B cell (primary cell): ENCODE measurements at regions of chr7 and their contacts with region 1.

Region 1: DNA sequence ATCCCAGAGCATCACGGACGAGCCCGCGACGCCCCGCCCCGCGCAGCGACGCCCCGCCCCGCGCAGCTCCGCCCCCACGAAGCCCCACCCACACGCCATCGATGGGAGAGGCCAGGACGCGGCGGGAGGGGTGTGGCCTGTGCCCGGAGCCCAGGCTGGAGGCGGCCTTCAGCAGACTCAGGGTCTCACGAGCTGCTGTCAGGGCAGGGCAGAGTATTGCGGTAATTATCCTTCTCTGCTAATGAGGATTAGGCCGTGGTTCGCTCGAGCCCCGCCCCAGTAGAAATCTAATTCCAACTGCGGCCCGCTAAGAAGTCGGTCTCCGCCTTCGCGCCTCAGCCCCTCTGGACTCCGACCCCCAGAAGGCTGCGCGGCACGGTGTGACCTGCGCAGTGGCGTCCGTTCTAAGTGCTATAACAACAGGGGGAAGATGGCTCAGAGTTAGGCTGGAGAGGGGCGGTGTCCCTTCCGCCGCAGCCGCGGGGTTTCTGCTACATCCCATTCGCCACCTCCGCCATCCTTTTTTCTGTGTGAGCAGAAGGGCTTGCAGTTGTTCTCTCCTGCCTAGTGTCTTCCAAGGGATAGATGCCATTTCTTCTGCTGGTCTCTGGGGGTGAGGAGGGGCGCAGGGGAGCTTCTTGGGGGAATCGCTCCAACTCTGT is 337 bp upstream of the NT5C3A start:
- DNase-seq: peak; percentile 98
- ATAC-seq: peak; percentile 93
- H3K4me3 ChIP-seq: peak overlapping the region; percentile 19 to 92 (median 75)
- H3K4me3 Mint-ChIP-seq: peak overlapping the region; percentile 91
- H3K27ac ChIP-seq: peak overlapping the region; percentile 68 to 79
- H3K27ac Mint-ChIP-seq: peak overlapping the region; percentile 94
- H3K4me1 ChIP-seq: peaks cover 30% of the 10 kb centered on the region in 2 donors
- H3K4me1 Mint-ChIP-seq: peaks cover 39% of the 10 kb centered on the region
- H3K27me3 ChIP-seq: no peaks in the 10 kb centered on the region
- H3K27me3 Mint-ChIP-seq: no peaks in the 10 kb centered on the region
- CTCF ChIP-seq: no peak

Region 2: DNA sequence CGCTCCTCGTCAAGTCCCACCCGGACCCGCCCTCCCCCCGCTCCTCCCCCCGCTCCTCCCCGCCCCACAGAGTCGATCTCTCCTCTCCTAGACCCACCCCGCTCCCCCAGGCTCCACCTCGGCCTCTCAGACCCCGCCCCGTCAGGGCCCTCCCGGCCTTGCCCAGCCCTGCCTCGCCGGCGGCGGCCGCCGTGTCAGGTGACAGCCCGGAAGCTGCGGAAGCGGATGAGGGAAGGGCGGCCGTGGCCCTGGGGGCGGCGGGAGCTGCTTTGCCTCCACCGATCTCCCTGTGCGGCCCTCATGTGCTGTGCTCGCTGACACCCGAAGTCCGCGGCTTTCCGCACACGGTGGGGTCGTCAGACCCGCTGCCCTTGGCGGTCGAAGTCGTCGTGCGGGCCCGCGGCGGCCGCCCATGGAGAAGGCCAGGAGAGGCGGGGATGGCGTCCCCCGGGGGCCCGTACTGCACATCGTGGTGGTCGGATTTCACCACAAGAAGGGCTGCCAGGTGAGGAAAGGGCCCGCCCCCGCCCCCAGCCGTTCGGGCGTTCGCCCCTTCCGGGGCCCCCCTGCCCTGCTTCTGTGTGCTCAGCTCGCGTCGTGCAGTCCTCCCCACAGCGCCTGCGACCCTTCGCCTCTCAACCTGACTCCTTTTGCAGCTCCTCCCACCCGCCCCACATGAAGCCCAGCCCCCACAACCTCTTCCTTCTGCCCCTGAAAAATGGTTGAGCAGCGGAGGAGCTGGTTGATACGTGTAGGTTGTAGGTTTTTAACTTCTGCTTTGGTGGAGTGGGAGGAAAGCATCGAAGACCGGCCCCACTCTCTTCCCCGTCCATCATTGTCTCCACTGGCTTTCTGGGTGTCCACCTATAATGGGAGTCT is 567.4 kb before region 1 on chr7 and contains the start of gene AVL9:
- CTCF ChIA-PET with region 1: no interaction called
- POLR2A ChIA-PET with region 1: interaction called, 7 read pairs
- intact Hi-C with region 1: loop called (anchors 1 kb)
- DNase-seq: peak; percentile 97
- ATAC-seq: peak; percentile 96
- H3K4me3 ChIP-seq: peak within 1 kb of the TSS; percentile 65 to 97 (median 91)
- H3K4me3 Mint-ChIP-seq: peak within 1 kb of the TSS; percentile 84
- H3K27ac ChIP-seq: peak within 1 kb of the TSS; percentile 85 to 98
- H3K27ac Mint-ChIP-seq: peak within 1 kb of the TSS; percentile 96
- H3K4me1 ChIP-seq: peaks cover 14 to 16% of the 10 kb centered on the region in 2 donors
- H3K4me1 Mint-ChIP-seq: peaks cover 36% of the 10 kb centered on the region
- H3K27me3 ChIP-seq: no peaks in the 10 kb centered on the region
- H3K27me3 Mint-ChIP-seq: no peaks in the 10 kb centered on the region
- CTCF ChIP-seq: no peak
- total RNA-seq, gene AVL9: 48.0 and 63.3 TPM in 2 replicates

Region 3: DNA sequence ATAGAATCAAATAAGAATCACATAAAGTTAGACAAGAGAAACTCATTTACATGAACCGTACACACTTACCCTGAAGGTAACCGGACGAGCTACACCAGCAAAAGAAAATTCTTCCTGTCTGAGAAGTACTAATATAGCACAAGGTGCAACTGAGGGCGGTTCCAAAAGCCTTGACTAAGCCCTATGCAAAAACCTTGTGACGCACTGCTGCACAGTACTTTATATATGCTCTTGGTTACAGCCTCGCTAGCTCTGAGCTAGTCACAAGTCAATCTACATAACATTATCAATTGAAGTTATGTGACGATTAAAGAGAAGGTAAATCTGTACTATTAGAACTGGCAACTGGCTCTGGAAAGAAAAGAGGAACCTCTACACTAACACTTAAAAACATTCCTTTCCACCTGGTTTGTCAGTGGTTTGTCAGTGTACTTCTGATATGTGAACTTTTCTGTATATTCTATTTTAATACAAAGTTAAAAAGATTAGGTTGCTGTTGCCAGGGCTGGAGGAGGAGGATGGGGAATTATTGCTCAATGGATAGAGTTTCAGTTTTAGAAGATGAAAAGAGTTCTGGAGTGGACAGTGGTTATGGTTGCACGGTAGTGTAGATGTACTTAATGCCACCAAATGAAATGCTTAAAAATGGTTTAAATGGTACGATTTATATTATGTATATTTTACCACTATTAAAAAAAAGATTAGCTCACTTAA is 22.0 kb before region 1 on chr7:
- CTCF ChIA-PET with region 1: interaction called, 8 read pairs
- POLR2A ChIA-PET with region 1: interaction called, 12 read pairs
- intact Hi-C with region 1: loop called (anchors 1 kb)
- DNase-seq: peak; percentile 85
- ATAC-seq: peak; percentile 96
- H3K4me3 ChIP-seq: peak overlapping the region; percentile 26 to 79 (median 44)
- H3K4me3 Mint-ChIP-seq: peak overlapping the region; percentile 84
- H3K27ac ChIP-seq: peak overlapping the region; percentile 2 to 73
- H3K27ac Mint-ChIP-seq: peak overlapping the region; percentile 86
- H3K4me1 ChIP-seq: peaks cover 21 to 40% of the 10 kb centered on the region in 2 donors
- H3K4me1 Mint-ChIP-seq: peaks cover 67% of the 10 kb centered on the region
- H3K27me3 ChIP-seq: no peaks in the 10 kb centered on the region
- H3K27me3 Mint-ChIP-seq: no peaks in the 10 kb centered on the region
- CTCF ChIP-seq: no peak

Region 4: DNA sequence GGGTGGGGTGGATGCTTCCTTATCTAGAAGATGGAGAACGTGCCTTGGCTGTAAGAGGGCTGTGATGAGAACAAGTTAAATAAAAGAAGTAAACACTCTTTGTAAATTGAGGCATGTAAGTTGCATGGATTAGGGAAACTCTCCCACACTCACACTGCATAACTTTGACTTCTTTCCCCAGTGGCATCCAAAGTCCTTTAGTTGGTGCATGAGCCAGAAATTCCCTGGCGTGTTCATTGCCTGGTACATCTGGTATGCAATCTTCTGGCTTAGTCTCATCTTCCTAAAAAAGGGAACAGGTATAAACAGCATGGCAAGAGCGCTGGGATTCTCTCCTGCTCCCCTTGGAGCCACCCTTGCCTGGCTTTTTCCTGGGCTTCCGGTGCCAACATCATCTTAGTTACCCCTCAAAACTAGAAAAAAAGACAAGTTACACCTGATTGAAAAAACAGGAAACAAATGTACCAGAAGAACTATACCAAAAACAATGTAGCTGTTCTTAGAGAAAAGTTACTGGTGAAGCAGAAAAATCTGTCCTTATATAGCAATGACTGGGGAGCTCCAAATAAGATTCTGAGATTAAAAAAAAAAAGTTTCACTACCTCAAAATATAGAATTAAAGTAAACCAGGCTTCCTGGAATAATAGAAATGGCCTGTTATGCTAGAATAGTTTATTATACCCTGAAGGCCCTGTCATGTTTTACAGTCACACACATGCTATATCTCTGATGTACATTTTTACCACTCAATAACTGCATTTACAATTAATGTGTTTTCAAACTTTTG is 36.4 kb after region 1 on chr7:
- CTCF ChIA-PET with region 1: interaction called, 5 read pairs
- POLR2A ChIA-PET with region 1: no interaction called
- intact Hi-C with region 1: loop called (anchors 2 kb)
- DNase-seq: peak; percentile 57
- ATAC-seq: peak; percentile 81
- H3K4me3 ChIP-seq: peak overlapping the region in 1 of 5 experiments; percentile 50
- H3K4me3 Mint-ChIP-seq: peak overlapping the region; percentile 69
- H3K27ac ChIP-seq: peak overlapping the region; percentile 25 to 88
- H3K27ac Mint-ChIP-seq: peak overlapping the region; percentile 89
- H3K4me1 ChIP-seq: peaks cover 43 to 53% of the 10 kb centered on the region in 2 donors
- H3K4me1 Mint-ChIP-seq: peaks cover 56% of the 10 kb centered on the region
- H3K27me3 ChIP-seq: no peaks in the 10 kb centered on the region
- H3K27me3 Mint-ChIP-seq: no peaks in the 10 kb centered on the region
- CTCF ChIP-seq: no peak

Region 5: GRCh38 chr7:33118383-33118782 is 55.5 kb after region 1 on chr7:
- CTCF ChIA-PET with region 1: no interaction called
- POLR2A ChIA-PET with region 1: no interaction called
- intact Hi-C with region 1: no loop called
- DNase-seq: no peak
- ATAC-seq: no peak
- H3K4me3 ChIP-seq: no peak overlapping the region
- H3K4me3 Mint-ChIP-seq: no peak overlapping the region
- H3K27ac ChIP-seq: no peak overlapping the region
- H3K27ac Mint-ChIP-seq: no peak overlapping the region
- H3K4me1 ChIP-seq: no peaks in the 10 kb centered on the region
- H3K4me1 Mint-ChIP-seq: no peaks in the 10 kb centered on the region
- H3K27me3 ChIP-seq: peaks cover 0 to 8% (median 3%) of the 10 kb centered on the region in 4 experiments
- H3K27me3 Mint-ChIP-seq: peaks cover 19% of the 10 kb centered on the region
- CTCF ChIP-seq: no peak

Region 6: GRCh38 chr7:33157781-33158180 is 94.9 kb after region 1 on chr7:
- CTCF ChIA-PET with region 1: no interaction called
- POLR2A ChIA-PET with region 1: no interaction called
- intact Hi-C with region 1: no loop called
- DNase-seq: no peak
- ATAC-seq: no peak
- H3K4me3 ChIP-seq: no peak overlapping the region
- H3K4me3 Mint-ChIP-seq: no peak overlapping the region
- H3K27ac ChIP-seq: no peak overlapping the region
- H3K27ac Mint-ChIP-seq: no peak overlapping the region
- H3K4me1 ChIP-seq: no peaks in the 10 kb centered on the region
- H3K4me1 Mint-ChIP-seq: peaks cover 3% of the 10 kb centered on the region
- H3K27me3 ChIP-seq: no peaks in the 10 kb centered on the region
- H3K27me3 Mint-ChIP-seq: no peaks in the 10 kb centered on the region
- CTCF ChIP-seq: no peak

Region 7: GRCh38 chr7:33862946-33863814 is 800.3 kb after region 1 on chr7:
- CTCF ChIA-PET with region 1: no interaction called
- POLR2A ChIA-PET with region 1: no interaction called
- intact Hi-C with region 1: no loop called
- DNase-seq: no peak
- ATAC-seq: no peak
- H3K4me3 ChIP-seq: no peak overlapping the region
- H3K4me3 Mint-ChIP-seq: no peak overlapping the region
- H3K27ac ChIP-seq: no peak overlapping the region
- H3K27ac Mint-ChIP-seq: no peak overlapping the region
- H3K4me1 ChIP-seq: no peaks in the 10 kb centered on the region
- H3K4me1 Mint-ChIP-seq: no peaks in the 10 kb centered on the region
- H3K27me3 ChIP-seq: peaks cover 0 to 4% (median under 1%) of the 10 kb centered on the region in 4 experiments
- H3K27me3 Mint-ChIP-seq: peaks cover 13% of the 10 kb centered on the region
- CTCF ChIP-seq: no peak